Naive thymus-derived CD4-positive, alpha-beta T cell (primary cell): ENCODE measurements at regions of chr6 and their contacts with region 1.

Region 1: GRCh38 chr6:90274451-90275030 is 22.1 kb downstream of the BACH2 start:
- DNase-seq: peak; percentile 57 to 99 (median 98)
- ATAC-seq: peak; percentile 96
- H3K4me3 ChIP-seq: peak overlapping the region; percentile 19
- H3K4me3 Mint-ChIP-seq: peak overlapping the region; percentile 73 to 90 (median 80)
- H3K27ac ChIP-seq: peak overlapping the region; percentile 99
- H3K27ac Mint-ChIP-seq: peak overlapping the region; percentile 80 to 100 (median 100)
- H3K4me1 ChIP-seq: peaks cover 18 to 85% of the 10 kb centered on the region in 2 donors
- H3K4me1 Mint-ChIP-seq: peaks cover 46 to 99% (median 89%) of the 10 kb centered on the region in 7 donors
- H3K27me3 ChIP-seq: no peaks in the 10 kb centered on the region
- H3K27me3 Mint-ChIP-seq: no peaks in the 10 kb centered on the region

Region 2: DNA sequence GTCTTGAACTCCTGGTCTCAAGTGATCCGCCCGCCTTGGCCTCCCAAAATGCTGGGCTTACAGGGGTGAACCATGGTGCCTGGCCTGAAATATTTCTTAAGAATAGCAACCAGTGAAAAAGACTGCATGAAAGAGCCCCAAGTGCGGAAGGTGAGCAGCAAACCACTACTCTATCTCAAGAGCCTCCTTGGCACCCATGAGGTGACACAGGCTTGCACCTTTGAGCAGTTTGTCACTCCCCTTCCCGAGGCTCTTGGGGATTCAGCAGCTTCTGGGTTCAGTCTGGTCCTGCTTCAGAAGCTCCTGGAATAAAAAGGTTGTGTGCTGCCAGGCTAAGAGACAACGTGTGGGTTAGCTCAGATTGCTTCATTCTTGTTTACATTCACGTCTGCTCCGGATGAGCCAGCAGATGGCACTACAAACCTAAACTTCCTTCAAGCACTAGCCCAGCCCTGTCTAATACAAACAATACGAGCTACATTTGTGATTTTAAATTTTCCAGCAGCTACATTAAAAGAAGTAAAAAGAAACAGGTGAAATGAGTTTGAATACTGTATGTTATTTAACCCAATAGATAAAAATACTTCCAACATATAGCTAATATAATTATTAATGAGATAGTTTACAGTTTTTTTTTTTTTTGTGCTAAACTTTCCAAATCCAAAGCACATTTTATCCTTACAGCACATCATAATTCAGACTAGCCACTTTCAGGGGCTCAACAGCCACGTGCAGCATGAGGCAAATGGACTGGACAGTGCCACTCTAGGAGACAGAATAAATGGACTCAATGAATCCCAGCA is 334.1 kb before region 1 on chr6:
- CTCF ChIA-PET with region 1: interaction called, 8 read pairs
- POLR2A ChIA-PET with region 1: no interaction called
- intact Hi-C with region 1: loop called in 1 of 2 experiments (anchors 1 kb)
- DNase-seq: peak; percentile 22 to 80 (median 70)
- ATAC-seq: peak; percentile 90
- H3K4me3 ChIP-seq: no peak overlapping the region
- H3K4me3 Mint-ChIP-seq: peak overlapping the region in 1 of 10 donors; percentile 48
- H3K27ac ChIP-seq: peak overlapping the region; percentile 53
- H3K27ac Mint-ChIP-seq: peak overlapping the region in 8 of 9 donors; percentile 50 to 91 (median 78)
- H3K4me1 ChIP-seq: peaks cover 0 to 9% of the 10 kb centered on the region in 2 donors
- H3K4me1 Mint-ChIP-seq: peaks cover 6 to 75% (median 39%) of the 10 kb centered on the region in 7 donors
- H3K27me3 ChIP-seq: no peaks in the 10 kb centered on the region
- H3K27me3 Mint-ChIP-seq: no peaks in the 10 kb centered on the region

Region 3: GRCh38 chr6:90184334-90185298 is 89.9 kb before region 1 on chr6:
- CTCF ChIA-PET with region 1: interaction called, 3 read pairs
- POLR2A ChIA-PET with region 1: interaction called, 8 read pairs
- intact Hi-C with region 1: loop called (anchors 1 to 2 kb)
- DNase-seq: peak in 2 of 9 donors; percentile 31 to 41
- ATAC-seq: no peak
- H3K4me3 ChIP-seq: peak overlapping the region; percentile 18
- H3K4me3 Mint-ChIP-seq: peak overlapping the region; percentile 1 to 81 (median 66)
- H3K27ac ChIP-seq: peak overlapping the region; percentile 50
- H3K27ac Mint-ChIP-seq: peak overlapping the region; percentile 47 to 97 (median 93)
- H3K4me1 ChIP-seq: peaks cover 0 to 63% of the 10 kb centered on the region in 2 donors
- H3K4me1 Mint-ChIP-seq: peaks cover 34 to 91% (median 79%) of the 10 kb centered on the region in 7 donors
- H3K27me3 ChIP-seq: no peaks in the 10 kb centered on the region
- H3K27me3 Mint-ChIP-seq: no peaks in the 10 kb centered on the region

Region 4: GRCh38 chr6:90202156-90202555 is 72.4 kb before region 1 on chr6:
- CTCF ChIA-PET with region 1: interaction called, 3 read pairs
- POLR2A ChIA-PET with region 1: interaction called, 3 read pairs
- intact Hi-C with region 1: loop called in 1 of 2 experiments (anchors 1 kb)
- DNase-seq: no peak
- ATAC-seq: peak; percentile 45
- H3K4me3 ChIP-seq: no peak overlapping the region
- H3K4me3 Mint-ChIP-seq: peak overlapping the region; percentile 35 to 74 (median 53)
- H3K27ac ChIP-seq: peak overlapping the region; percentile 25
- H3K27ac Mint-ChIP-seq: peak overlapping the region; percentile 64 to 91 (median 79)
- H3K4me1 ChIP-seq: peaks cover 0 to 21% of the 10 kb centered on the region in 2 donors
- H3K4me1 Mint-ChIP-seq: peaks cover 24 to 92% (median 53%) of the 10 kb centered on the region in 7 donors
- H3K27me3 ChIP-seq: no peaks in the 10 kb centered on the region
- H3K27me3 Mint-ChIP-seq: no peaks in the 10 kb centered on the region

Region 5: GRCh38 chr6:90230548-90231215 is 43.9 kb before region 1 on chr6:
- CTCF ChIA-PET with region 1: interaction called, 5 read pairs
- POLR2A ChIA-PET with region 1: interaction called, 10 read pairs
- intact Hi-C with region 1: loop called (anchors 1 kb)
- DNase-seq: no peak
- ATAC-seq: no peak
- H3K4me3 ChIP-seq: no peak overlapping the region
- H3K4me3 Mint-ChIP-seq: peak overlapping the region; percentile 40 to 82 (median 56)
- H3K27ac ChIP-seq: peak overlapping the region; percentile 88
- H3K27ac Mint-ChIP-seq: peak overlapping the region; percentile 42 to 99 (median 95)
- H3K4me1 ChIP-seq: peaks cover 24 to 97% of the 10 kb centered on the region in 2 donors
- H3K4me1 Mint-ChIP-seq: peaks cover 54 to 100% (median 98%) of the 10 kb centered on the region in 7 donors
- H3K27me3 ChIP-seq: no peaks in the 10 kb centered on the region
- H3K27me3 Mint-ChIP-seq: peaks cover 0 to 2% (median 0%) of the 10 kb centered on the region in 5 donors

Region 6: DNA sequence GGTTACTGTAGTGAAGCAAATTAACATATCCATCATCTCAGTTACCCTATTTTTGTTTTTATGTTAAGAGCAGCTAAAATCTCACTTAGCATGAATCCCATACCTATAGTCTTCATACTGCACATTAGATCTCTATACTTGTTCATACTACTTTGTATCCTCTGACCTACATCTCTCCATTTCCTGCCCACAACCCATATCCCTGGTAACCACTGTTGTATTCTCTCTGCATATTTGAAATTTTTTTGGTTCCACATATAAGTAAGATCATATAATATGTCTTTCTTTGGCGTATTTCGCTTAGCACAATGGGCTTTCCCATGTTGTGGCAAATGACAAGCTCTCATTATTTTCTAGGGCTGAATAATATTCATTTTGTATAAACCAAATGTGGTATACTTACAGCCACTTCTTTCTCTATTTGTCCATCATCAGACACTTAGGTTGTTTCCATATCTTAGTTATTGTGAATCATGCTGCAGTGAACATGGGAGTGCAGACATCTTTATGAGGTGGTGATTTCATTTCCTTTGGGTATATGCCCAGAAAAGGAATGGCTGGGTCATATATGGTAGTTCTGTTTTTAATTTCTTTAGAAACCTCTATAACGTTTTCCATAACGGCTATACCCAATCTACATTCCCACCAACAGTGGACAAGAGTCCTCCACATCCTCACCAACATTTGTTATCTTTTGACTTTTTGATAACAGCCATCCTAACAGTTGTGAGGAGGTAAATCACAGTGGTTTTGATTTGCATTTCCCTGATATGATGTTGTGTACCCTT is 17.6 kb before region 1 on chr6:
- CTCF ChIA-PET with region 1: no interaction called
- POLR2A ChIA-PET with region 1: interaction called, 5 read pairs
- intact Hi-C with region 1: loop called (anchors 1 to 2 kb)
- DNase-seq: peak in 6 of 9 donors; percentile 57 to 76 (median 66)
- ATAC-seq: peak; percentile 82
- H3K4me3 ChIP-seq: no peak overlapping the region
- H3K4me3 Mint-ChIP-seq: peak overlapping the region in 7 of 10 donors; percentile 1 to 71 (median 20)
- H3K27ac ChIP-seq: peak overlapping the region; percentile 59
- H3K27ac Mint-ChIP-seq: peak overlapping the region; percentile 9 to 98 (median 75)
- H3K4me1 ChIP-seq: peaks cover 0 to 63% of the 10 kb centered on the region in 2 donors
- H3K4me1 Mint-ChIP-seq: peaks cover 42 to 97% (median 95%) of the 10 kb centered on the region in 7 donors
- H3K27me3 ChIP-seq: no peaks in the 10 kb centered on the region
- H3K27me3 Mint-ChIP-seq: no peaks in the 10 kb centered on the region

Region 7: DNA sequence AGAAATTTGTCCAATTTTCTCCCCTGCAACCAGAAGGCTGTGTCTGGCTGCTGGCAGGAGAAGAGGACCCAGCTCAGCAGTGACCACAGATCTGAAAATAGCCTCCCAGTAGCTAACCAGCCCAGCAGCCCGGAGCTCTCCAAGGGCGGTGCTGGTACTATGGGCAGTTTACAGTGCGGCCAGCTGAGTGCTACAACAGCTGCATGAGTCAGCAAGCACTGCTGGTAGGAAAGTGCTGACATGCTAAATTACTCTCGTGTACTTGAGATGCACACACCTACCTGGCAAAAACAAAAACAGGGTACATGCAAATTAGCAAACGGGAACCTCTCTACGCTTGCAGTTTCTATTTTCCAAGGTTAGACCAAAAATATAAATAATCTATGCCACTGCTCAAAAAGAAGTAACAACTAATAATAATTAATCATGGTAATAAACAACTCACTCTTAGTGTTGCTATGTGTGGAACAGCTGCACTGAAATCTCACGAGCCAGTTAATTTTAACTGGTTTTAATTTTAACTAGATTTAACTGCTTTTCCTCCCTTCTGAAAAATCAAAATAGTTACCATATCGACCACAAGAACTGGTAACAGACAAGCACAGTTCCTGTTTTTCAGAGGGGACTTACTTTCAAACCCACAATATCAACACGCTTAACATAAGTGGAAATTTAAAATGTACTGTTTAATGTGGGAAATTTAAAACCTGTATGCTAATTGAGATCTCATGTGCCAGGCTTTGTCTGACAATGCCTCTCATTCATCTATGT is 11.3 kb after region 1 on chr6:
- CTCF ChIA-PET with region 1: interaction called, 29 read pairs
- POLR2A ChIA-PET with region 1: interaction called, 179 read pairs
- intact Hi-C with region 1: loop called (anchors 1 kb)
- DNase-seq: peak in 8 of 9 donors; percentile 53 to 87 (median 74)
- ATAC-seq: peak; percentile 68
- H3K4me3 ChIP-seq: peak overlapping the region; percentile 51
- H3K4me3 Mint-ChIP-seq: peak overlapping the region; percentile 83 to 94 (median 88)
- H3K27ac ChIP-seq: peak overlapping the region; percentile 81
- H3K27ac Mint-ChIP-seq: peak overlapping the region; percentile 89 to 100 (median 96)
- H3K4me1 ChIP-seq: peaks cover 21 to 72% of the 10 kb centered on the region in 2 donors
- H3K4me1 Mint-ChIP-seq: peaks cover 54 to 96% (median 92%) of the 10 kb centered on the region in 7 donors
- H3K27me3 ChIP-seq: no peaks in the 10 kb centered on the region
- H3K27me3 Mint-ChIP-seq: peaks cover 0 to 2% (median 0%) of the 10 kb centered on the region in 5 donors